ENCODE measurements at regions of chr9 and their contacts with region 1.

Region 1: GRCh38 chr9:38443181-38443580 is 18.9 kb upstream of the IGFBPL1 start:
- H3K4me3 ChIP-seq: no peak overlapping the region
- H3K27ac ChIP-seq: no peak overlapping the region
- H3K4me1 ChIP-seq: no peaks in the 10 kb centered on the region
- CTCF ChIP-seq: no peak

Region 2: DNA sequence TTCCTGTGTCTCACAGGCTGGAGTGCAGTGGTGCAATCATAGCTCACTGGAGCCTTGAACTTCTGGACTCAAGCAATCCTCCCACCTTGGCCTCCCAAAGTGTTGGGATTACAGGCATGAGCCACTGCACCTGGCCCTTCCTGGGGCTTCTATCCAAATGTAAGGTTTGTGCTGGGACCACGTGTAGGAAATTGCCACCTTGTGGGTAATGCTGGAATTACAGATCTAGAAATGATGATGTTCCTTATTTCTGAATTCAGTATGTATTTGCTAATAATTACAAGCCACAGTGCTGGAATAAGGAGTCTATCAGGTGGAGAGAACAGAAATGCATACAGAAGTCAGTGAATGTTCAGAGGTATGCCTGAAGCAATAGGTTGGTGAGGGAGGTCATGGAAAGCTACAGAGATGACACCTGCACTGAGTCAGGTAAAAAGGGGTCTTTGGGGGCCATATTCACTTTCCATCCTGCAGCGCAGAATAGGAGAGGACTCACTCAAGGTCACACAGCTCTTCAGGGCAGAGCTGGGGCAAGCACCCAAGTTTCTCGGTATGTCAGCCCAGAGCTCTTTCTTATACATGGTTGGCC is 10.2 kb before region 1 on chr9:
- CTCF ChIA-PET with region 1: interaction called, 18 read pairs
- POLR2A ChIA-PET with region 1: no interaction called
- H3K4me3 ChIP-seq: no peak overlapping the region
- H3K27ac ChIP-seq: no peak overlapping the region
- H3K4me1 ChIP-seq: no peaks in the 10 kb centered on the region
- CTCF ChIP-seq: no peak

Measured in HEK293 (cell line).